ENCODE measurements at regions of chr11 and their contacts with region 1.

Region 1: DNA sequence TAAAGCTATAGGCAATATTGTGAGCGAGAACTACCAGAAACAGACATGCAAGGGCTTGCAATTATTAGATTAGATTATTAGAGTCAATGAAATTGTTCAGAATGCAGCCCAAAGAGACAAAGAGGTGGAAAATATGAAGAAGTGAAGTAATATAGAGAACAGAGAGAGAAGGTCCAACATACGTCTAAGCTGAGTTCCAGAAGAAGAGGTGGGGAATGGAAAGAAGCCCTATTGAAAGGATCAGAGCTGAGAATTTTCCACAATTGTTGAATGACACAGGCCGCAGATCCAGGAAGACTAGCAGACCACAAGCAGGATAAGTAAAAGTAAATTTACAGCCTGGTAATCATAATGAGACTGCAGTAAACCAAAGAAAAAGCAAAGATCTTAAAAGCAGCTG is 93.2 kb downstream of the EXT2 start:
- DNase-seq: no peak
- H3K4me3 ChIP-seq: no peak overlapping the region
- H3K27ac ChIP-seq: peak overlapping the region; percentile 83
- H3K4me1 ChIP-seq: peaks cover 78% of the 10 kb centered on the region
- H3K27me3 ChIP-seq: no peaks in the 10 kb centered on the region
- CTCF ChIP-seq: no peak

Region 2: DNA sequence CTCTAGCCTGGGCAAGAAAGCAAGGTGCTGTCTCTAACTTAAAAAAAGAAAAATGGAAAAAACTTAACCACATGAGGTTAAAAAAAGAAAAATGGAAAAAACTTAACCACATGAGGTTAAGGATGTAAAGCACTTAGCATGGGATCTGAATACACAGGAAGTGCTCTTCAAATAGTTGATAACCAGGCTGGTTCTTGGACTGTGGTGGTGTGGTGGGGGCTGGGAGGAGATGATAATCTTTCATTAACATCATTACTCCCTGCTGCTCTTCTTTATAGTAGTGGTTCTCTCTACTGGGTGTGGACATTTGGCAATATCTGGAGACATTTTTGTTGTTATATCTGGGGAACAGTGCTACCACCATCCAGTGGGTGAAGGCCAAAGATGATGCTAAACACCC is 741.5 kb before region 1 on chr11:
- CTCF ChIA-PET with region 1: no interaction called
- POLR2A ChIA-PET with region 1: no interaction called
- intact Hi-C with region 1: no loop called
- DNase-seq: no peak
- H3K4me3 ChIP-seq: no peak overlapping the region
- H3K27ac ChIP-seq: no peak overlapping the region
- H3K4me1 ChIP-seq: no peaks in the 10 kb centered on the region
- H3K27me3 ChIP-seq: no peaks in the 10 kb centered on the region
- CTCF ChIP-seq: no peak

Region 3: DNA sequence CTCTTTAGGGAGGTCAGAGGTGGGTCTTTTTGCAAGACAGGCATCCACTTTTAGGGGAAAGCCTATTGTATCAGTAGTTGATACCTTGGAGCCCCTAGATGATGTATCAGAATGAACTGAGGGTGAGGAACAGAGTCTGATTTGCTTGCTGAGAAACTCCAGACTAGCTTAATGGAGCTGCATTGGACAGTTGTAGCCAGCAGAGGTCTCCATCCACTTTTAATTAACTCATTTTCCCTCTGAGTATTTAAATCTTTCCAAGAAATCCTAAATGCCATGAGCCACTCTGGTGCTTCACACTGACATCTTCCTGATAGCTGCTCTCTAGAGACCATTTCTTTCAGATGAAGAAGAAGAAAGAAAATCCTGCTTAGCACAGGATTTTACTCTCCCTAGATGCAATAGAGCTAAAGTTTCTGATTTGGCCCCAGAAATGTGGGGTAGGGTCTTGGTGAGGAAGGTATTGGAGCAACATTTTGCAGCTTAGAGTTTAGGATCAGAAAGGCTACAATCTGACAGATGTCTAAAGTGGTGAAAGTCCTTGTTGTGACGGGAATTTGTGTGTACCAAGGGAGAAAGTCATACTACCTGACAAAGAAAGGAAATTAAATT is 55.2 kb before region 1 on chr11:
- CTCF ChIA-PET with region 1: interaction called, 11 read pairs
- POLR2A ChIA-PET with region 1: no interaction called
- intact Hi-C with region 1: no loop called
- DNase-seq: peak; percentile 91
- H3K4me3 ChIP-seq: no peak overlapping the region
- H3K27ac ChIP-seq: peak overlapping the region; percentile 49
- H3K4me1 ChIP-seq: peaks cover 68% of the 10 kb centered on the region
- H3K27me3 ChIP-seq: no peaks in the 10 kb centered on the region
- CTCF ChIP-seq: peak; percentile 99

Region 4: DNA sequence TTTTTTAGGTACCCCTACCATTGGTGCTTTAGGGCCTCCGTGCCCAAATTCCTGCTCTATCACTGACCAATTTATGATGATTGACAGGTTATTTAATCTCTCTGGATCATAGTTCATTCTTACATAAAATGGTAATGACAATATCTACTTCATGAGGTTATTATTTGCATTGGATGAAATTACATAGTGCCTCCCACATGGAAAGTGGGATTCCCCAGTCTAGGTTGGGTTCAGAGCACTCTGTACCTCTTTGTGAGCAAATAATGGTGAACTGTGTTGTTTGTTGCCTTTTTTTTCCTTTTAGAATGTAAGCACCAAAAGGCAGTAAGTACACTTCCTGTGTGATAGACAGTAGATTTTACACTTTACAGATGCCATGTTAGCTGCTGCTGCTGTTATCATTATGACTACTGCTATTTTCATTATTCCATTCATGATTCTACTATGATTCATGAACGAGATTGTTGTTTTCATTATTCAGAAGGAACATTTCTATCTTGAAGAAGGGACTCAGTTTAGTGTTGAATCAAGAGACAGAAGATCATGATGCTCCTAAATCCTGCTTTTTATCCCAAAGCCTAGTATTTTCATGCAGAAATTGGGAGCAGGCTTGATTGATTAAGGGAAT is 20.4 kb after region 1 on chr11:
- CTCF ChIA-PET with region 1: no interaction called
- POLR2A ChIA-PET with region 1: interaction called, 11 read pairs
- intact Hi-C with region 1: no loop called
- DNase-seq: no peak
- H3K4me3 ChIP-seq: no peak overlapping the region
- H3K27ac ChIP-seq: no peak overlapping the region
- H3K4me1 ChIP-seq: no peaks in the 10 kb centered on the region
- H3K27me3 ChIP-seq: no peaks in the 10 kb centered on the region
- CTCF ChIP-seq: no peak

Region 5: GRCh38 chr11:44309483-44310205 is 121.0 kb after region 1 on chr11 and contains the start of gene ALX4:
- CTCF ChIA-PET with region 1: no interaction called
- POLR2A ChIA-PET with region 1: no interaction called
- intact Hi-C with region 1: loop called (anchors 5 kb)
- DNase-seq: peak; percentile 98
- H3K4me3 ChIP-seq: peak within 1 kb of the TSS; percentile 78
- H3K27ac ChIP-seq: peak within 1 kb of the TSS; percentile 92
- H3K4me1 ChIP-seq: peaks cover 35% of the 10 kb centered on the region
- H3K27me3 ChIP-seq: no peaks in the 10 kb centered on the region
- CTCF ChIP-seq: peak; percentile 40
- total RNA-seq, gene ALX4: 135 TPM in 2 replicates

Region 6: DNA sequence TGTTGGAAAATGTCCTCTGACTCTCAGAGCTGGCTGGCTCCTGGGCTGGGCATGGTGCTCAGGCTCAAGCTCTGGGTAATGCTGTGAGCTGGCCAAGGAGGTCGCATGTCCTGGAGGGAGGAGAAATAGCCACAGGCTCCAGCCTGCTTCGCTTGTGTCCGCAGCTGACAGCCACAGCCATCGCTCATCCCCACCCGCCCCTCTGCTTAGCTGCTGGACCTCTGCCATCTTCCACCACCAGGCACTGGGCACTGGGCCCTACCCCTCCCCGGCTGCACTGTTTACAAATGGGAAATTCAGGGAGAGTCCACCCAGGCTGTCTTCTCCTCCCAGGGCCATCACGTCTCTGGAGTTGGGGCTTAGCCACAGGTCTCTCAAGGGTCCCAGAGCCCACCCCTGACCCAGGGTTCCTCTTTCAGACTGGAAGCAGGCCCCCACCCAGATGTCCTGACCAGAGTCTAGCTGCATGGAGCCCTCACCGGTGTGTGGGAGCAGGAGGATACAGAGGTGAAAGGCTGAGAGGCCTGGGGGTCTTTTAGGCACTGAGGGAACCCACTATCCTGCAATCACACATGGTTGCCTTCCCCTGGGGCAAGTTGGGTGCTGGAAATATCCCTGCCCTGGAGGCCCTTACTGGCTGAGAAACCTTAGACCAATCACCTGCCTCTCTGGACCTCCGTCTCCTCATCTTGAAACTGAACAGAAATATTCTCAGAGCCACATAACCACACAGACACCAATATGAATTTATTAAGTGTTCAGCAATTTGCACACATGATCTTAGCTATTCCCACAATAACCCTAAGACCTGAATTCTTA is 439.5 kb after region 1 on chr11:
- CTCF ChIA-PET with region 1: no interaction called
- POLR2A ChIA-PET with region 1: no interaction called
- intact Hi-C with region 1: no loop called
- DNase-seq: no peak
- H3K4me3 ChIP-seq: no peak overlapping the region
- H3K27ac ChIP-seq: no peak overlapping the region
- H3K4me1 ChIP-seq: peaks cover 8% of the 10 kb centered on the region
- H3K27me3 ChIP-seq: no peaks in the 10 kb centered on the region
- CTCF ChIP-seq: no peak

Region 7: DNA sequence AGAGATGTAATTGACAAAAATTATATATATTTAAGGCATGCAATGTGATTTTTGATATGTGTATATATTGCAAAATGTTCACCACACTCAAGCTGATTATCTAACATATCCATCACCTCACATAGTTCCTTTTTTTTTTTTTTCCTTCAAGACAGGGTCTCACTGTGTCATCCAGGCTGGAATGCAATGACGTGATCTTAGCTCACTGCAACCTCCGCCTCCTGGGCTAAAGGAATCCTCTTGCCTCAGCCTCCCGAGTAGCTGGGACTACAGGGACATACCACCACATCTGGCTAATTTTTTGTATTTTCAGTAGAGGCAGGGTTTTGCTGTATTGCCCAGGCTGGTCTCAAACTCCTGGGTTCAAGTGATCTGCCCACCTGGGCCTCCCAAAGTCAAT is 1551.2 kb after region 1 on chr11:
- CTCF ChIA-PET with region 1: no interaction called
- POLR2A ChIA-PET with region 1: no interaction called
- intact Hi-C with region 1: loop called (anchors 5 kb)
- DNase-seq: no peak
- H3K4me3 ChIP-seq: no peak overlapping the region
- H3K27ac ChIP-seq: no peak overlapping the region
- H3K4me1 ChIP-seq: peaks cover 12% of the 10 kb centered on the region
- H3K27me3 ChIP-seq: no peaks in the 10 kb centered on the region
- CTCF ChIP-seq: no peak